Left cardiac atrium (tissue), 4 donors: ENCODE measurements at regions of chr21 and their contacts with region 1.

Region 1: DNA sequence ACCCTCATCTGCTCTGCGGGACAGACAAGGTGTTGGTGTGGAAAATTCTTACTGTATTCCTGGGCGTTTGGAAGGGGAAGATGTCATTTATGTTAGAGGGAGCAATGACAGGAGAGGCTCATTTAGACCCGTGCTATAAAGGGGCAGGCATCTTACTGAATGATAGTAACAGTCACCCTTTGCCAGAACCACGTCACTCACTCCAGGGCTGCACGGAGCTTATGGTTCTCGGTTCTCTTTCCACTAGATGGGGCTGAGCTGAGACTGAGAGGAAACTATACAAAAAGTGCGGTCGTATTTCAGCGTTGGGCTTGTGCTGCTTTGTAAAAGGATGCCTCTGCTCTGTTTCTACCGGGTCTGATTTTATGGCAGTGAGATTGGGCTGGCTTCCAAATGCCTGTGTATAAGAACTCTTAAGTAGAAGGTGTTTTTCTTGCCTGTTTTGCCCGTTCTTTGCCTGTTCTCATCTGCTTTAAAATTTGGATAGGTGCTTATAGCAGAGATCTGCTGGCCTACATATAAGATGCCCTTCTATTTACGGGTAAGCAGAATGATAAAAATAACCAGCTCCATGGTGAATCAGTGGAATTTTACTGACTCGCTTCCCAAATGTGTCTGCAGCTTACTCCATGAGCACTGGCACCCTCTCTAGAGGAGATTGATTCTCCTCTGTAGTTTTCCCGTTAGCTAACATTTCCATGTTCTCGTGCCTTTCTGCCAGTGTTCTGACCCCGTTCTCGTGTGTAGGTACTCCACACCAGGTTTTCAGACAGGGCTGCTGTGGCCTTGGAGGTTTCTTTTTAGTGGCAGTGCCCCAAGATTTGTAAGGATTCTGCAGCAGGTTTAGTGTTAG is 55.9 kb downstream of the MRPS6 start:
- DNase-seq: peak; percentile 68
- ATAC-seq: peak; percentile 92 to 93

Region 2: GRCh38 chr21:34078915-34079314 is 50.4 kb before region 1 on chr21:
- intact Hi-C with region 1: loop called in 1 of 2 experiments (anchors 5 kb)
- DNase-seq: no peak
- ATAC-seq: no peak

Region 3: DNA sequence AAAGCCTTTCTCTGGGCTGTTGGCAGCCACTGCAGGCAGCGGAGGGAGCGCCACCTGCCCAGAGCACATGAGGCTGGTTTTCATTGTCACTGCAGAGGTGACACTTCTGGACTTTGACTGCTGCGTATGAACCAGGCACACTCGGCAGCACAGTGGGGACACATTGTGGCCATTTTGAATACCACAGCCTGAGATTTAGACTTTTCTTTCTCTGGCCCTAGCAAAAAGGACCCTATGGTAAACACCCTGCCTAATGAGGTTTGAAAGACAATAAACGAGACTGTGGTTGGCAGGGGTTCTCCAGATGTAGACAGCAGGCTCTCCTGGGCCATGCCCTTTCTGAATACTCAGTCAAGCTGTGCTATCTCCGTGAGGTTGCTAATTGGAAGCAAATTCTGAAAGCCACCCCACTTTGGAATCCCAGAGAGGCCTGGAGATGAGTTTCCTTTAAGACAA is 222.5 kb after region 1 on chr21:
- intact Hi-C with region 1: loop called in 1 of 2 experiments (anchors 2 kb)
- DNase-seq: peak; percentile 35
- ATAC-seq: peak; percentile 82 to 90